GM13977 (cell line): ENCODE measurements at regions of chr19 and their contacts with region 1.

Region 1: DNA sequence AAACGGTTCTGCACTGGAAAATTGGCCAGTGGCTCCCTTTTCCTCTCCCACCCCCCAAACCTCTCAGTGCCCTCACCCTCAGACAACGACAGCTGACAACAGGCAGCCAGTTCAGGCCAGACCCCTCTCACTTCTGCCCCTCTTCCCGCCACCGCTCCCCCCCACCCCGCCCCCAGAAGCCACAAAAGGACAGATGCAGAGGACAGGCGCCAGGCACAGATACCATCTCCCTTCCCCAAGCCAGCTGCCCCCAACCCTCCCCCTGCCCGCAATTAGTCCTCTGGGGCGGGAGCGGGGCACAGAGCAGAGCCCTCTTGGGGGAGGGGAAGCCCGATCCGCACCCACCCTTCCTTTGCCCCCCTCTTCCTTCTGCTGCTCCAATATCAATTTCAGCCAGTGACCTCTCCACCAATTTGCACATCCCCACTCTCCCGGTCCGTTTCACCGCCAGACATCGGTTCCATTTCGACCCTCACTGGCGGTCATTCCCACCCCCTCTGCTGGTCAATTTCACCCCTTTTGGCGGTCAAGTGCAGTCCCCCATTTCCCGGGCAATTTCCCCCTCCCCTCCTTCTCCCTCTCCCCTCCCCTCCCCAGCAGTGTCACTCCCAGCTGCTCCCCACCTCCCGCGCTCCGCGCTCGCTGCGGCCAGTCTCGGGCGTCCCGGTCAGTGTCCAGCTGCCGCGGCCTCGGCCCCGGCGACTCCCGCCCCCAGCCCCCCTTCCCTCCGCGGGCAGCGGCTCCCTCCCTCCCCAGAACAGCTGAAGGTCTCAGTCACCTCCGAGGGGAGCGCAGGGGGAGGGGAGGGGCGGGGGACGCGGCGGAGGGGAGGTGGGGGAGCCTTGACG is at the start of gene SHD:
- DNase-seq: no peak
- CTCF ChIP-seq: no peak

Region 2: DNA sequence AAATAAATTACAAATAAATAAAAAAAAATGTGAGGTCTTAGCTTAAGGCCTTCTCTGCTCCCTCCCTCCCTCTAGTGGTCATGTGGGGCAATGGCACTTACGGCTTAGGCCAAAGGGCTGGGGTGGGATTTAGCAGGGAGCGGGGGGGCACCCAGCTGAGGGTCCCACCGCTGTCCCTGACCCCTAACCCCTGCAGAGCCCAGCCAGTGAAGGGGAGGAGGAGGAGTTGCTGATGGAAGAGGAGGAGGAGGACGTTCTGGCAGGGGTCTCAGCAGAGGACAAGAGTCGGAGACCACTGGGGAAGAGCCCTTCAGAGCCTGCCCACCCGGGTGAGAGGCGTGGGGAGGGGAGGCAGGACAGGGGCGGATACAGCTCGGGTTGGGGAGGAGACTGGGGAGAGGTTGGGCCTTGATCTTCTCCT is 74.1 kb after region 1 on chr19:
- in situ Hi-C with region 1: loop called (anchors 10 kb)
- DNase-seq: peak; percentile 79
- CTCF ChIP-seq: peak; percentile 87

Region 3: GRCh38 chr19:4524808-4525562 is 246.3 kb after region 1 on chr19:
- in situ Hi-C with region 1: loop called (anchors 10 kb)
- DNase-seq: peak; percentile 84
- CTCF ChIP-seq: peak; percentile 83